ENCODE measurements at regions of chr11 and their contacts with region 1.

Region 1: DNA sequence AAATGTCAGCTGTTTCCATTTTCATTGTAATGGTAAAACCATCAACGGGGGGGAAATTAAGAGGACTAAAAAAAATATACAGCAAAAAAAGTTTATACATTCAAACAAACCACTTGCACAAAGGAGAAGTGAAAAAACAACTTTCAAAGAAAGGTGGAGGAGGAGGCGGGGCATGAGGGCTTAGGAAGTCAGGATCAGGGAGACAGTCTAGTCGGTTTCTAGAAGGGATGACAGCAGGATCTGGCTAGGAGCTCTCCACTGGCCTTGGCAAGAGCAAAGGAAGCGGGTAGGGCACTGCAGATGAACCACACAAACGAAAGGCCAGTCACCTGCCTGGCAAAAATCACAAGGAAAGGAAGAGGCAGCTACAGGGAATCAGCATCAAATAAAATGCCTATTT is 31.0 kb downstream of the NAP1L4 start:
- DNase-seq: no peak
- CTCF ChIP-seq: no peak

Region 2: GRCh38 chr11:2791521-2792380 is 169.3 kb before region 1 on chr11:
- CTCF ChIA-PET with region 1: no interaction called
- POLR2A ChIA-PET with region 1: no interaction called
- DNase-seq: no peak
- CTCF ChIP-seq: no peak

Region 3: GRCh38 chr11:2975594-2975993 is 14.5 kb after region 1 on chr11:
- CTCF ChIA-PET with region 1: interaction called, 11 read pairs
- POLR2A ChIA-PET with region 1: no interaction called
- DNase-seq: peak; percentile 39
- CTCF ChIP-seq: peak; percentile 57

Measured in GM10248 (cell line).